CD4-positive, alpha-beta memory T cell (primary cell): ENCODE measurements at regions of chr10 and their contacts with region 1.

Region 1: DNA sequence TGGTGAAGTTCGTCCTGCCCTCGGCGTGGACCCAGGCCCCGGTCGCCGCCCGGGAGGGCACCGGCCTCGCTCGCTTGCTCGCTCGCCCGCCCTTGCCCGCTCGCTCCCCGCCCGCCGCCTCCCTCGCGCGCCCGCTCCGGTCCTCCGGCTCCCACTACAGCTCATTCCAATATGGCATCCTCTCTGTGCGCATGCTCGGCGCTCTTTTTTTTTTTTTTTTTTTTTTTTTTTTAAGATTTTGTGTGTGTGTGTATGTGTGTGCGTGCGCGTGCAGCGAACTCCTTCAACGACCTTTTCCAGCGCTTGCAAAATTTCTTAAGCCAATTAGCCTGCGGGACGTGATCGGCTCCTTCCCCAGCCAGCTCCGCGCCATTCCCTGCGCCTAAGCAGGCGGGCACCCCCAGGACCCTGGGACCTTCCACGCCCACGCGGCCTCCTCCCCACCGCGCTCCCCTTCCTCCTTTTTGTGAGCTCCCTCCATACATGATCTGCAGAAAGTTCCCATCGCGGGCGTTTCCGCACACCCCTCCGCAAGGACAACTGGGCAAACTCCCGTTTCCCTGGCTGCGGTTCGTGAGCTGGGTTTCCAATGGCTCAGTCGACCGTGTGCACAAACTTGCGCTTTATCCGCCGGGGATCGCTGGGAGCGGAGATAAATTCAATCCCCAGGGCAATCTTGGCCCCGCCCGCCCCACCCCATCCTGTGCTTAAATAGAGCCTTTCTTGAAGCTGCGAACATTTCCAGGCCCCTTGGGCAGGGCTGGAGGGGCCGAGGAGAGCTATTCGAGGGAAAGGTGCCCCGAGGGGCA is at the start of gene SFMBT2:
- DNase-seq: peak; percentile 59 to 67 (median 64)
- H3K4me3 ChIP-seq: peak within 1 kb of the TSS; percentile 83 to 84
- H3K4me3 Mint-ChIP-seq: peak within 1 kb of the TSS; percentile 94 to 100 (median 96)
- H3K27ac ChIP-seq: peak within 1 kb of the TSS; percentile 42
- H3K27ac Mint-ChIP-seq: peak within 1 kb of the TSS; percentile 77 to 95 (median 90)
- H3K4me1 ChIP-seq: peaks cover 37% of the 10 kb centered on the region
- H3K4me1 Mint-ChIP-seq: peaks cover 4 to 61% (median 37%) of the 10 kb centered on the region in 4 donors
- H3K27me3 ChIP-seq: no peaks in the 10 kb centered on the region
- H3K27me3 Mint-ChIP-seq: no peaks in the 10 kb centered on the region
- total RNA-seq, gene SFMBT2: 20.0 to 22.3 TPM

Region 2: GRCh38 chr10:6920072-6921019 is 490.7 kb before region 1 on chr10:
- CTCF ChIA-PET with region 1: interaction called, 180 read pairs
- POLR2A ChIA-PET with region 1: interaction called, 3 read pairs
- intact Hi-C with region 1: loop called (anchors 1 kb)
- DNase-seq: peak; percentile 59 to 69 (median 63)
- H3K4me3 ChIP-seq: no peak overlapping the region
- H3K4me3 Mint-ChIP-seq: peak overlapping the region in 3 of 8 donors; percentile 12 to 61 (median 42)
- H3K27ac ChIP-seq: no peak overlapping the region
- H3K27ac Mint-ChIP-seq: peak overlapping the region in 2 of 7 donors; percentile 42 to 50
- H3K4me1 ChIP-seq: peaks cover 19% of the 10 kb centered on the region
- H3K4me1 Mint-ChIP-seq: peaks cover 16 to 19% (median 17%) of the 10 kb centered on the region in 4 donors
- H3K27me3 ChIP-seq: no peaks in the 10 kb centered on the region
- H3K27me3 Mint-ChIP-seq: peaks cover 0 to 4% of the 10 kb centered on the region in 2 donors

Region 3: GRCh38 chr10:7136016-7136415 is 275.1 kb before region 1 on chr10:
- CTCF ChIA-PET with region 1: no interaction called
- POLR2A ChIA-PET with region 1: no interaction called
- intact Hi-C with region 1: no loop called
- DNase-seq: no peak
- H3K4me3 ChIP-seq: no peak overlapping the region
- H3K4me3 Mint-ChIP-seq: no peak overlapping the region
- H3K27ac ChIP-seq: no peak overlapping the region
- H3K27ac Mint-ChIP-seq: no peak overlapping the region
- H3K4me1 ChIP-seq: no peaks in the 10 kb centered on the region
- H3K4me1 Mint-ChIP-seq: peaks cover 4 to 8% (median 5%) of the 10 kb centered on the region in 4 donors
- H3K27me3 ChIP-seq: peaks cover 4% of the 10 kb centered on the region
- H3K27me3 Mint-ChIP-seq: peaks cover 14 to 16% of the 10 kb centered on the region in 2 donors

Region 4: GRCh38 chr10:7192831-7193361 is 218.2 kb before region 1 on chr10:
- CTCF ChIA-PET with region 1: no interaction called
- POLR2A ChIA-PET with region 1: no interaction called
- intact Hi-C with region 1: loop called (anchors 5 kb)
- DNase-seq: peak; percentile 63 to 79 (median 68)
- H3K4me3 ChIP-seq: peak overlapping the region; percentile 17 to 26
- H3K4me3 Mint-ChIP-seq: peak overlapping the region; percentile 78 to 93 (median 83)
- H3K27ac ChIP-seq: peak overlapping the region; percentile 43
- H3K27ac Mint-ChIP-seq: peak overlapping the region; percentile 81 to 96 (median 92)
- H3K4me1 ChIP-seq: peaks cover 56% of the 10 kb centered on the region
- H3K4me1 Mint-ChIP-seq: peaks cover 45 to 68% (median 62%) of the 10 kb centered on the region in 4 donors
- H3K27me3 ChIP-seq: no peaks in the 10 kb centered on the region
- H3K27me3 Mint-ChIP-seq: no peaks in the 10 kb centered on the region

Region 5: DNA sequence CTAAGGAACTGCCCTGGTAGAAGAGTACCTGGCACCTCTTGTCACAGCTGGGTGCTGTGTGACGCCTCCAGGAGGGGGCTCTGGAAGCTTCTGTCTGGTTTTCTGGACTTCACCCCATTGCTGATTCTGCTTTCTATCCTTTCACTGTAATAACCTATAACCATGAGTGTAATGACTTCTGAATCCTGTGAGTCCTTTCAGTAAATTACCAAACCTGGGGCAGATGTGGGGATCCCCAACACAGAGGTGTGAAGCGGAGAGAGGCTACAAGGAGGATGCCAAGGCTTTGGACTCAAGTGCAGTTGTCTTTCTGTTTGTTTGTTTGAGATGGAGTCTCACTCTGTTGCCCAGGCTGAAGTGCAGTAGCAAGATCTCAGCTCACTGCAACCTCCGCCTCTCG is 143.9 kb before region 1 on chr10:
- CTCF ChIA-PET with region 1: interaction called, 11 read pairs
- POLR2A ChIA-PET with region 1: interaction called, 11 read pairs
- intact Hi-C with region 1: no loop called
- DNase-seq: no peak
- H3K4me3 ChIP-seq: no peak overlapping the region
- H3K4me3 Mint-ChIP-seq: no peak overlapping the region
- H3K27ac ChIP-seq: no peak overlapping the region
- H3K27ac Mint-ChIP-seq: peak overlapping the region in 2 of 7 donors; percentile 57 to 72
- H3K4me1 ChIP-seq: peaks cover 23% of the 10 kb centered on the region
- H3K4me1 Mint-ChIP-seq: peaks cover 23 to 36% (median 32%) of the 10 kb centered on the region in 4 donors
- H3K27me3 ChIP-seq: no peaks in the 10 kb centered on the region
- H3K27me3 Mint-ChIP-seq: no peaks in the 10 kb centered on the region

Region 6: GRCh38 chr10:7400068-7400715 is 10.9 kb before region 1 on chr10:
- CTCF ChIA-PET with region 1: interaction called, 10 read pairs
- POLR2A ChIA-PET with region 1: interaction called, 3 read pairs
- intact Hi-C with region 1: no loop called
- DNase-seq: no peak
- H3K4me3 ChIP-seq: no peak overlapping the region
- H3K4me3 Mint-ChIP-seq: no peak overlapping the region
- H3K27ac ChIP-seq: no peak overlapping the region
- H3K27ac Mint-ChIP-seq: no peak overlapping the region
- H3K4me1 ChIP-seq: peaks cover 6% of the 10 kb centered on the region
- H3K4me1 Mint-ChIP-seq: peaks cover 32 to 57% (median 37%) of the 10 kb centered on the region in 4 donors
- H3K27me3 ChIP-seq: no peaks in the 10 kb centered on the region
- H3K27me3 Mint-ChIP-seq: no peaks in the 10 kb centered on the region

Region 7: DNA sequence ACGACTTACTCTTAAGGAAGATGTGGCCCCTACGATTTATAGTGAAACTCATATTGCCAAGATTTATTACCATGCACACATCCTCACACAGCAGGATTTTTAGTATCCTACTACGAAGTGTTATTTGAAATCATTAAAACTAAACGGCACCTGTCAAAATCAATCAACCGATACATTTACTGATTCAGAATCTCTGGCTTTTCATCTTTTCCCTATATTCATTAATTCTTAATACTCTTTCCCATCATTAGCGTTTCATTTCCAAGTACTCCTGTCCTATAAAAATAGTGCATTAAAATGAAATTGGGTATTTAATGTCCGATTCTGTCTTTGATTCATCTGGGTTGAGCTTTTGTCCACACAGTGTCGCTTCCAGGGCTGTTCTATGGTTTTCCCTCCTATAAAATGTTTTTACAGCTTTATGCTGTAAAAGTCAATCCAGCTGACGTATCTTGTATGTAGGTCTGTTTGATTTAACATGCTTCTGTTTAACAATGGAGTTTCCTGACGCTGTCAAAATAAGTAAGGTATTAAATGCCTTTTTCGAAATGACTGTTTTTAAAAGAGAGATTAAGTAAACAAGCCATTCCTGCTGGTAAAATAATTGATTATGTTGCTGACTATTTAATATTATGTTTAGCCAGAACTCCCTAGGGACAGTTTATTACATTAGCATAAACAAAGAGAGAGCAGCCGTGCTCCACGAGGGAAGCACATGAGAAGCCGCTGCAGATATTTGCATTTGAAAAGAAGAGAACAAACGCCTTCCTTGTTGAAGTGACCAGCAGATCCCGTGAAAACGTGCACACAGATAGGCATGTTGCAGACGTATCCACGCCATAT is 22.0 kb after region 1 on chr10:
- CTCF ChIA-PET with region 1: no interaction called
- POLR2A ChIA-PET with region 1: no interaction called
- intact Hi-C with region 1: no loop called
- DNase-seq: no peak
- H3K4me3 ChIP-seq: no peak overlapping the region
- H3K4me3 Mint-ChIP-seq: no peak overlapping the region
- H3K27ac ChIP-seq: no peak overlapping the region
- H3K27ac Mint-ChIP-seq: no peak overlapping the region
- H3K4me1 ChIP-seq: no peaks in the 10 kb centered on the region
- H3K4me1 Mint-ChIP-seq: peaks cover 0 to 7% (median 1%) of the 10 kb centered on the region in 4 donors
- H3K27me3 ChIP-seq: no peaks in the 10 kb centered on the region
- H3K27me3 Mint-ChIP-seq: peaks cover 0 to 3% of the 10 kb centered on the region in 2 donors

Region 8: GRCh38 chr10:7475046-7475911 is 64.2 kb after region 1 on chr10:
- CTCF ChIA-PET with region 1: no interaction called
- POLR2A ChIA-PET with region 1: no interaction called
- intact Hi-C with region 1: no loop called
- DNase-seq: no peak
- H3K4me3 ChIP-seq: no peak overlapping the region
- H3K4me3 Mint-ChIP-seq: no peak overlapping the region
- H3K27ac ChIP-seq: no peak overlapping the region
- H3K27ac Mint-ChIP-seq: no peak overlapping the region
- H3K4me1 ChIP-seq: peaks cover 42% of the 10 kb centered on the region
- H3K4me1 Mint-ChIP-seq: peaks cover 31 to 51% (median 44%) of the 10 kb centered on the region in 4 donors
- H3K27me3 ChIP-seq: no peaks in the 10 kb centered on the region
- H3K27me3 Mint-ChIP-seq: no peaks in the 10 kb centered on the region